HEK293 (cell line): ENCODE measurements at regions of chr16 and their contacts with region 1.

Region 1: DNA sequence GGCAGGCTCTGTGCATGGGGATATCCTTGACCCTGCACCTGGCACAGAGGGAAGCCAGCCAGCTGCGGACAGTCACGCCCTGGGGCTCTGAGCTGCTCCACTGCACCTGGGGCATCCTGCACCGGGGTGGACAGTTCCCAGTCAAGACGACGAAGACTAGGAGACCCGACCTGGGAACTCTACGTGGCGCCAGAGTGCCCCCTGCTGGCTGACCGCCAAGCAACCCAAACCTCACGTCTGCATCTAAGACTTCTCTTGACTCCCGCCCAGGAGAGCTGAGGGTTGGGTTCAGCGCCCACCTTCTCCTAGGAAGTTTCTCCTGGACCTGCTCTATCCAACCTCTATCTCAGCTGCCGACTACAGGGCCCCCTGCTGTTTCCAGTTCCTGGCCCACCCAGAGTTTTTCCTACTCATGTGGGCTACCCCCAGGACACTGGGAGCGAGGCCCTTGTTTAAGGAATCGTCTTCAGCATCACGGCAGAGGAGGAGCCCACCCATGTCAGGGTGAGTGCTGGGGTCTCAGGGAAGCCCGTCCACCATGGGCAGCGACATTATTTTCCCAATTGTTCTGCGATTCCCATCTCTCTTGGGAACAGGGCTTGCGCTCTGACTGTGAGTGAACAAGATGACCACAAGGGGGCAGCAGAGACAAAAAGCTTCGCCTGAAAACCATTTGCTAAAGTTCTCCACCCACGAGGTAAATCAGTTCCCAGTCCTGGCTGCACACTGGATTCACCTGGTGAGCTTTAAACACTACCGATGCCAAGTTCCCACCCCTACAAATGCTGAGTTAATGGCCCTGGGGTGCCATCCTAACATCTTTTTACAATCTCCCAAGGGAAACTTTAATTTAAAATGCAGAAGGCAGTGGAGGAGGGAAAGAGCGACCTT is 29.3 kb downstream of the TLE7 start:
- H3K4me3 ChIP-seq: peak overlapping the region; percentile 23; the same call in 1 of the 2 replicates
- H3K27ac ChIP-seq: no peak overlapping the region
- H3K4me1 ChIP-seq: no peaks in the 10 kb centered on the region
- CTCF ChIP-seq: peak; percentile 60

Region 2: DNA sequence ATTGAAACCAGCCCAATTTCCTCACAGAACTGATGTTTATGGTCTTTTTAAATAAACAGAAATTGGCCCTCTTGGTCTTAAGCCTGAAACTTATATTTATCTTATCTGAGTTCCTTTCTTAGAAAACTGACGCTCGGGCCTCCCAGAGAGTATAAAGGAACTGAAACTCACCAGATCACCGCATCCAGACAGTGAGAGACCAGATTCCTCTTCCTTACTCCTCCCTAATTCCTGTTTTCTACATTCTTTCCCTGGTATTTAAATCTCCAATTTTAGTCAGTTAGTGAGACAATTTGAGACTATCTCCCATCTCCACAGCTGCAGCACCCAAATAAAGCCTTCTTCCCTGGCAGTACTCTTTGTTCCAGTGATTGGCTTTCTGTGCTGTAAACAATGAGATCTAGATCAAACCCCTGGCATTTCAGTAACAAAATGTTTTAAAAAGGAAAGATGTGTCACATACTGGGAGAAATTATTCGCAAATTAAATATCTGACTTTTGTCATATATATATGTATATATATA is 185.8 kb before region 1 on chr16:
- CTCF ChIA-PET with region 1: no interaction called
- POLR2A ChIA-PET with region 1: no interaction called
- H3K4me3 ChIP-seq: no peak overlapping the region
- H3K27ac ChIP-seq: no peak overlapping the region
- H3K4me1 ChIP-seq: no peaks in the 10 kb centered on the region
- CTCF ChIP-seq: no peak

Region 3: DNA sequence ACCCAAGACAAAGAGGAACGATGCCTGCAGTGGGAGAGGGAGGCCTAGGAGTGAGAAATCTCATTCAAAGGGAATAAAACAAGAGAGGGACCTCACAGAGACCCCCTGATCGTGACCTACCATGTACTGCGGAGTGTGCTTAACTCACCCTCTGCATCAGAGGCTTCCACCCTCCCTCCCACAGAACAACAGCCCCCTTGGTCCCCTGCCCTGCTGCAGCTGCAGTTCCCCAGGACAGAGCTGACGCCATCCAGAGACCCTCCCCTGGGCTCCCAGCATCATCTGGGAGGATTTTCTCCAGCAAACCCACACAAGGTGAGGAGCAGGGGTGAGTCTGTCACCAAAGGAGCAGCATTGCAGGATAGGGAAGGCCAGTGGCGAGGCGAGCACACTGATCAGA is 10.5 kb before region 1 on chr16:
- CTCF ChIA-PET with region 1: interaction called, 10 read pairs
- POLR2A ChIA-PET with region 1: no interaction called
- H3K4me3 ChIP-seq: no peak overlapping the region
- H3K27ac ChIP-seq: no peak overlapping the region
- H3K4me1 ChIP-seq: no peaks in the 10 kb centered on the region
- CTCF ChIP-seq: no peak

Region 4: DNA sequence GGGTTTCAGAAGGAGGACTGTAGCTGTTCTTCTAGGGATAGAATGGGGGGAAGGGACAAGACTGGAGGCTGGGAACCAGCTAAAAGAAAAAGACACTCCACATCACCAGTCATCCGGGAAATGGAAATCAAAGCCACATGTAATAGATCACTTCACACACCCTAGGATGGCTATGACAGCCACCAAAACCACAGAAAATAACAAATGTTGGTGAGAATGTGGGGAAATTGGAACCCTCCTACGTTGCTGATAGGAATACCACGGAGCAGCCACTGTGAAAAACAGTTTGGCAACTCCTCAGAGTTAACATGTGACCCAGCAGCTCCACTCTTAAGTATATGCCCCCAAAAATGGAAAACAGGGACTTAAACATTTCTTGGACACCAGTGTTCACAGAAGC is 27.0 kb after region 1 on chr16:
- CTCF ChIA-PET with region 1: interaction called, 10 read pairs
- POLR2A ChIA-PET with region 1: no interaction called
- H3K4me3 ChIP-seq: no peak overlapping the region
- H3K27ac ChIP-seq: no peak overlapping the region
- H3K4me1 ChIP-seq: no peaks in the 10 kb centered on the region
- CTCF ChIP-seq: no peak

Region 5: DNA sequence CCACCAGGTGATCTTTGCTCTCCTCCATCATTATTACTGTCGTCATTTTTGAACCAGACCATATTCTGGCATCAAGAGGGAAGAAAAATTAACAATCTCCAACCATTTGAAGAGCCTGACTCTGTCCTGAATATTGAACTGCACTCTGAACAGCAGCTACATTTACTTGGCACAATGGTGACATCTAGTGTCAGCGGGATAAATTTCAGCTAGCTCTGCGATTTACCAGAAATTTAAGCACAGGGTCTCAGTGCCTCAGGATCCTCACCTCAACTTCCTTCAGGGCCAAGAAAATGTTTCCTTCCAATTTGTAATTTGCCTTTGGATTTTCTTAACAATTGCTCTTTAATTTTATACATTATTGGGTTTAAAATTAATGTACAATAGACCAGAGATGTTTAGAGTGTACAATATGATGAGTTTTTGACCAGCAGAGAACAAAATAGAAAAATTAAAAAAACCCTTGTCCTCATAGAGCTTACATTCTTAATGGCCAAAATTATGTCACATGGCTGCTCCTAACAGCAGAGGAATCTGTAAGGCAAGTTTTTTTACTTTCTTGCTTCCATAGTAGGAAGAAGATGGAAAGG is 87.4 kb after region 1 on chr16:
- CTCF ChIA-PET with region 1: interaction called, 72 read pairs
- POLR2A ChIA-PET with region 1: no interaction called
- H3K4me3 ChIP-seq: no peak overlapping the region
- H3K27ac ChIP-seq: no peak overlapping the region
- H3K4me1 ChIP-seq: no peaks in the 10 kb centered on the region
- CTCF ChIP-seq: no peak

Region 6: GRCh38 chr16:71537643-71538042 is 125.1 kb after region 1 on chr16:
- CTCF ChIA-PET with region 1: interaction called, 17 read pairs
- POLR2A ChIA-PET with region 1: no interaction called
- H3K4me3 ChIP-seq: no peak overlapping the region
- H3K27ac ChIP-seq: no peak overlapping the region
- H3K4me1 ChIP-seq: no peaks in the 10 kb centered on the region
- CTCF ChIP-seq: peak; percentile 53; the same call in 1 of the 2 replicates

Region 7: DNA sequence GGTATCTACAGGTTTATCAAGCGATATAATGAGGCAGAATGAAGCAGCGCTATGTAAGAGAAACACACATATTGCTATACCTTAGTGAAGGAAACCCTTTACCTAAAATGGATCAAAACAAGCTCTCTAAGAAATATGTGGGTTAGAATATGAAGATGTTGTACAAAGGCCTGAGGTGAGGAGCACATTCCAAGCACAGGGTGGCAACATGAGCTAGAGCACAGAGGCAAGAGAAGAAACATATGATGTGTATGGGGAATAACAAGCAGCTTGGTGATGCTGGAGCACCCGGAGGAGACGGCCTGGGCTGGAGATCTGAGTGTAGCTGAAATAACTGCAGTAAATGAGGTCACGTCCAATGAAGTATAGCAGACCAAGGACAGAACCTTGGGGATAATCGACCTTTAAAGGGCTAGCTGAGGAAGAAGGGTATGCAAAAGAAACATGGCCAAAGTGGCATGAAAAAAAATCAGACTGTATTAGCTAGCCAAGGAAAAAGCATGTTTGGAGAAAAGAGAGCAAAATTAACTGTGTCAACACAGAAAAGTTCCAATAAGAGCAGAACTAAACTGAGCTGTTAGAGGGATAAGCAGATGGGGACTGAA is 257.5 kb after region 1 on chr16:
- CTCF ChIA-PET with region 1: no interaction called
- POLR2A ChIA-PET with region 1: no interaction called
- H3K4me3 ChIP-seq: no peak overlapping the region
- H3K27ac ChIP-seq: no peak overlapping the region
- H3K4me1 ChIP-seq: no peaks in the 10 kb centered on the region
- CTCF ChIP-seq: no peak